Endothelial cell of umbilical vein (primary cell): ENCODE measurements at regions of chr3 and their contacts with region 1.

Region 1: GRCh38 chr3:35908366-35909232 is 269.3 kb downstream of the ARPP21 start:
- DNase-seq: peak; percentile 84
- H3K4me3 ChIP-seq: no peak overlapping the region
- H3K27ac ChIP-seq: no peak overlapping the region
- H3K4me1 ChIP-seq: no peaks in the 10 kb centered on the region
- H3K27me3 ChIP-seq: peaks cover 2 to 5% of the 10 kb centered on the region in 2 experiments
- CTCF ChIP-seq: peak; percentile 64 to 73
- POLR2A ChIP-seq: no peak

Region 2: DNA sequence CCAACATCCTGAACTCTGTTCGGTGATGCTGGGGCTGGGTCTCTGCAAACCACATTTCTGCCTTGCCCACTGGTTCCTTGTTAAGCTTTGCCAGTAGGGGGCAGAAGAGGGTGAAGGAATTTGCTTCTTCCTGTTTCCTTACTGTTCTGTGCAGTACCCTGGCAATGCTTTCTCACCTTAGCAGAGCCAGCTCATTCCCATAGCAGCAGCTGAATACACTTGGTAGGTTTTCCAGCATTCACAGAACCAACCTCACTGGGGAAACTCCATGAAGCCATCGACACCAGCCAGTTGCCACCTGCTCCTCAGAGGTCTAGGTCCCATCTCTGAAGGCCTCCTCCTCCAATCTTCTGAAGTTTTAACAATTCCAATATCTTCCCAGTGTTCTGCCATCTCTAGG is 1801.7 kb before region 1 on chr3:
- CTCF ChIA-PET with region 1: interaction called, 20 read pairs
- POLR2A ChIA-PET with region 1: no interaction called
- dilution Hi-C with region 1: no loop called
- intact Hi-C with region 1: no loop called
- DNase-seq: peak; percentile 79
- H3K4me3 ChIP-seq: no peak overlapping the region
- H3K27ac ChIP-seq: no peak overlapping the region
- H3K4me1 ChIP-seq: no peaks in the 10 kb centered on the region
- H3K27me3 ChIP-seq: peaks cover 6 to 9% of the 10 kb centered on the region in 2 experiments
- CTCF ChIP-seq: peak; percentile 78 to 86
- POLR2A ChIP-seq: no peak

Region 3: DNA sequence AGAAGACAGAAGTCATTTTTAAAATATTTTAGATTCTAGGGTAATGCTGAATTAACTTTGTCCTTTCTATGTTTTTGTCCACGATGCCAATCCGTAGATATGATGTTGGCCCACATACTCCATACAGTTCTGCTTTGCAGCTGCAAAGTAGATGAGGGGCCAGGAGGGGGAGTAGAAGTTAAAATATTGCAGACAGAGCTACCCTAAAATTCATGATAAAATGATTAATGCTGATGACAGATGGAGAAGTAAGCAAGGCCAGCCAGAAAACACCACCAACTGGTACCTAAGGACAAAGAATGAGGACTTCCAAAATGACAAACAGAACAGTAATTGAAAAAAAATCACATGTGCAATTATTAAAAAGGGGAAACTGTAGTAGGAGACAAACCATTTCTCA is 1025.8 kb before region 1 on chr3:
- CTCF ChIA-PET with region 1: interaction called, 12 read pairs
- POLR2A ChIA-PET with region 1: no interaction called
- dilution Hi-C with region 1: no loop called
- intact Hi-C with region 1: loop called (anchors 1 kb)
- DNase-seq: no peak
- H3K4me3 ChIP-seq: no peak overlapping the region
- H3K27ac ChIP-seq: no peak overlapping the region
- H3K4me1 ChIP-seq: no peaks in the 10 kb centered on the region
- H3K27me3 ChIP-seq: no peaks in the 10 kb centered on the region
- CTCF ChIP-seq: peak in 1 of 2 donors; percentile 5
- POLR2A ChIP-seq: no peak

Region 4: DNA sequence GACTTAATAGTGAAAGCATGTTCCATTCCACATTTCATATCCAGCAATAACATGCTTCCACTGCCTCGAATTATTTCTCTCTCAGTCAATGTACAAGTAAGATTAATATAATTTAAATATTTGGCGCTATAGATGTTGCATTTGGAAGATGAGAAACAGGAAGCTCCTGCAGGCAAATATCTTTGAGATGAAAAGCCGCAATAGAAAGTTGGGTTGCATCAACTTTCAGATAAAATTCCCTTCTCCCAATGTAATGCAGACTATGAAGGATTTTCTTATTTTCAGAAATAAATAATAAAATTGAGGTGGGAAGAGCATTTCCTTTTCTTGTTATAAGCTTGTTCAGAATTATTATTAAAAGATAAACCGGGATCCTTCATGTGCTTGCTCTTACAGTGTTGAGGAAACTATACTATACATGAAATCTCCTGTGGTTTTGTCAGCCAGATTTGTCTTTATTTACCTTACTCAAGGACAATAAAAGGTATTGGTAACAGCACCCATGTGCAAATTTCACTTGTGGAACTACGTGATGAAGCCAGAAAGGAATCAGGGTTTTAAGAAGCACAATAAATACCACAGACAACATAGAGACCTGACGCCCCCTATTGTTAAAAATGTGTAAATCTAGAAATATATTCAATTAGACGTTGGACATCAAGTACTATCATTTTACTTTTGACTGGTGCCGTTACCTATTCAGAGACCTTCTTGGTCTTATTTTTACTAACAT is 37.7 kb after region 1 on chr3:
- CTCF ChIA-PET with region 1: interaction called, 65 read pairs
- POLR2A ChIA-PET with region 1: no interaction called
- dilution Hi-C with region 1: no loop called
- intact Hi-C with region 1: loop called (anchors 1 kb)
- DNase-seq: peak; percentile 59
- H3K4me3 ChIP-seq: no peak overlapping the region
- H3K27ac ChIP-seq: no peak overlapping the region
- H3K4me1 ChIP-seq: peaks cover 10% of the 10 kb centered on the region
- H3K27me3 ChIP-seq: peaks cover 5 to 11% of the 10 kb centered on the region in 2 experiments
- CTCF ChIP-seq: peak; percentile 20 to 50
- POLR2A ChIP-seq: no peak